SK-N-SH (cell line): ENCODE measurements at regions of chr9 and their contacts with region 1.

Region 1: DNA sequence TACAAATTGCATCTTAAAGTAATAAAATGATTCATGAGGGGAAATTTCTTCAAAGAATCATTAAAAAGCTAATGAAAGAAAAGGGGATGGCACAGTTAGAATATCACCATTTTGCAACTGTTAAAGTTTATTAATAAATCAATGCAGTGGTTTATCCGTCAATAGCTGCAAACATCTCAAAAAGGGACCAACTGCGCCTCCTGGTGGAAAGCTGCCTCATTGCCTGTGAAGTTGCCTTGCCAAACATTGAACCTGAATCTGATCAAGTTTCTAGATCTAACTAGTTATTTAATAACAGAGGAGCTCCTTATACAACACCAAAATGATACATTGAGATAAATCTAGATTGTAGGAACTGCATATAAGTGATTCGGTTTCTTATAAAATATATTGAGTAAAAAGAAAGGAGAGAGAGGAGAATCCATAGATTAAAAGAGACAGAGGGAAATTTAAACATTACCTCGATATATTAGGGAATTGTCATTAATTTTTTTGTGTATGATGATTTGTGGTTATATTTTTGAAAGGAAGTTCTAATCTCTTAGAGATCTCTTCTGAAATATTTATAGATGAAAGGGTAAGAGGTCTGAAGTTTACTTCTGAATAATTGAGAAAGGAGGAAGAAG is 6.9 kb upstream of the NDUFB6 start:
- DNase-seq: peak; percentile 45
- H3K4me3 ChIP-seq: no peak overlapping the region
- H3K27ac ChIP-seq: no peak overlapping the region
- H3K4me1 ChIP-seq: no peaks in the 10 kb centered on the region; a peak in 1 of 4 replicates
- H3K27me3 ChIP-seq: no peaks in the 10 kb centered on the region
- CTCF ChIP-seq: peak; percentile 98
- EP300 ChIP-seq: no peak
- RAD21 ChIP-seq: peak; percentile 82

Region 2: DNA sequence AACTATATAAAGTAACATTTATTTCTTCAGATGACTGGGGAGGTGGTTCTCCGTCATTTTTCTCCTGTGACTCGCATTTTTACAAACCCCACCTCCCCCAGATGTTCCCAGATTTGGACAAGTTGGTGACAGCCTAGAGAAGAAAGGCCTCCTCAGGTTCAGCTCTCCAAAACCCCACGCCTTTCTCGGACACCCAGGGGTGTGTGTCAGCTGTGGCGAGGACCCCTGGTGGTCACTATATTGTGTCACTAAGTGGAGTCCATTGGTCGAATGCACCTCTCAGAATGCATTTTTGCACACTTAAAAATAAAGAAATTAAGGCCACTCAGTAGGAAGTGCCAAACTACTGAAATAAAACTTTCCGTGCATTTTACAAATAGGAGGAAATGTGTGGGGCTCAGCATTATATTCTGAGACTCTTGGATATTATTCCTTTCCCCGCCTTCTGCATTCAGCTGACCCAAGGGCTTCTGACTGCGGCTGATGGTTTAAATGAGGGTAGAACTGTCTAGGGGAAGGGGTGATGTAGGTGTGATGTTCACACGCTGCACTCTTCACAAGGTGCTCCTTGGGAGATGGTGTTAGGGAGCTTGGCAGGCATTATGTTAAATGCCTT is 147.8 kb before region 1 on chr9:
- CTCF ChIA-PET with region 1: interaction called, 28 read pairs
- POLR2A ChIA-PET with region 1: no interaction called
- DNase-seq: peak; percentile 55
- H3K4me3 ChIP-seq: no peak overlapping the region
- H3K27ac ChIP-seq: peak overlapping the region in 1 of 2 experiments; percentile 57; a peak in 2 of 4 replicates
- H3K4me1 ChIP-seq: peaks cover 0 to 17% of the 10 kb centered on the region in 2 experiments; a peak in 3 of 4 replicates
- H3K27me3 ChIP-seq: no peaks in the 10 kb centered on the region
- CTCF ChIP-seq: peak; percentile 73
- EP300 ChIP-seq: no peak
- RAD21 ChIP-seq: peak; percentile 57

Region 3: DNA sequence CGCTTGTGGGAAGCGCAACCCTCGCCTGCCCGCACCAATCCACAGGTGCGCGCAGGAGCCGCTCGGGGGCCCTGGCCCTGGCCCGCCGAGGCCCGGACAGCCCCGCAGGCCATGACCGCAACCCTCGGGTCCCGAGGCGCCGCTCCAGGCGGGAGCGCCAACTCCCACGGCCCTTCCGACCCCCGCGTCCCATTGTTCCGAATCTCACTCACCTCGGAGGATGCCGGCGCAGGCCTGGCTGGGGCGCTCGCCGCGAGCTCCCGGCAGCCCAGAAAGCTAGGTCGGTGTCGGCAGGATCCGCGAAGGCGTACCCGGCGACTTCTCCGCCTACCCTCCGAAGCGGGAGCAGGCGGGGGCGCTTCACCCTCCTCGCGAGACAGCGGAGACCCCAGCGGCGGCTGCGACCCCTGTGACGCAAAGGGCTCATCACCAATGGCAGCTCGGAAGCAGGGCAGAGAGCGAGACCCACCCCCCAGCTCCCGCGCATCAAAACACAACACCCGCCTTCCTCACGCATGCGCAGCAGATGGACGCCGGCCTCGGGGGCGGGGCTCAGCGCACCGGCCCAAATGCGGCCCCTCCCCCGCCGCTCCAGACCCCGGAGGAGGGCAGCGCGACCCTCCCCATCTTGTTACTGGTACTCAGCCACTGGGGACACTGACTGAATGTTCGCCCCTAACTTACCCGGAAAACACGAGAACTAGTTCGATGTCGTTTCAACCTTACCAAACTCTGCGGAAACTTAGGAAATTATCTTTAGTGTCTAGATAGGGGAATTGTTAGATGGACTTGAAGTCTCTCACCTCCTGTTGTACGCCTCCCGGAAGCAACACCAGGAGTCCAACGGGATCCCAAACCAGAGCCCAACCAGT is 29.0 kb before region 1 on chr9:
- CTCF ChIA-PET with region 1: interaction called, 19 read pairs
- POLR2A ChIA-PET with region 1: no interaction called
- DNase-seq: peak; percentile 98
- H3K4me3 ChIP-seq: peak overlapping the region; percentile 91 to 94
- H3K27ac ChIP-seq: peak overlapping the region; percentile 97 to 98
- H3K4me1 ChIP-seq: peaks cover 0 to 2% of the 10 kb centered on the region in 2 experiments; a peak in 2 of 4 replicates
- H3K27me3 ChIP-seq: no peaks in the 10 kb centered on the region
- CTCF ChIP-seq: no peak
- EP300 ChIP-seq: no peak
- RAD21 ChIP-seq: no peak

Region 4: DNA sequence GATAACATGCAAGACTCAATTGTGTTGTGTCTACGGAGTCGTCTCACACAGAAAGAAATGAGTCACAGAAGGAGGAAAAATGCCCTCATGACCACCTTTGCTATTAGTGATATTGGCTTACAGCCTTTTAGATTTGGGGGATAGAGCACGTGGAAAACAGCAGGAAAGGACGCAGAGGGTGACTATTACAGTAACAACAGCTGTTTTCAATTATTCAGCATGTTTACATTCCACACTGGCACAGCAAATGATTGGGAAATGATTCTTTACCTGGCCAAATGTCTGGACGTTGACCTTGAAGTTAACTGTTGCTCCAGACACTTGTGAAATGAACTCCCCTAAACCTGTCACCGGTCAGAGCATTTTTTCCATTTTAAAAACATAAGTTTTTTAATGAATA is 374.8 kb after region 1 on chr9:
- CTCF ChIA-PET with region 1: interaction called, 12 read pairs
- POLR2A ChIA-PET with region 1: no interaction called
- DNase-seq: peak; percentile 61
- H3K4me3 ChIP-seq: no peak overlapping the region
- H3K27ac ChIP-seq: no peak overlapping the region; a peak in 1 of 4 replicates
- H3K4me1 ChIP-seq: peaks cover 0 to 9% of the 10 kb centered on the region in 2 experiments; a peak in 2 of 4 replicates
- H3K27me3 ChIP-seq: no peaks in the 10 kb centered on the region
- CTCF ChIP-seq: no peak
- EP300 ChIP-seq: no peak
- RAD21 ChIP-seq: no peak

Region 5: GRCh38 chr9:33381231-33381791 is 801.5 kb after region 1 on chr9:
- CTCF ChIA-PET with region 1: no interaction called
- POLR2A ChIA-PET with region 1: no interaction called
- DNase-seq: no peak
- H3K4me3 ChIP-seq: no peak overlapping the region
- H3K27ac ChIP-seq: no peak overlapping the region
- H3K4me1 ChIP-seq: peaks cover 0 to under 1% of the 10 kb centered on the region in 2 experiments; a peak in 1 of 4 replicates
- H3K27me3 ChIP-seq: no peaks in the 10 kb centered on the region
- CTCF ChIP-seq: no peak
- EP300 ChIP-seq: no peak
- RAD21 ChIP-seq: no peak